ENCODE measurements at regions of chrX and their contacts with region 1.

Region 1: GRCh38 chrX:123093792-123094191 is 90.3 kb upstream of the GRIA3 start:
- DNase-seq: no peak
- ATAC-seq: no peak
- H3K4me3 ChIP-seq: no peak overlapping the region
- H3K27ac ChIP-seq: no peak overlapping the region
- H3K4me1 ChIP-seq: no peaks in the 10 kb centered on the region
- H3K27me3 ChIP-seq: no peaks in the 10 kb centered on the region
- CTCF ChIP-seq: no peak

Region 2: GRCh38 chrX:123060986-123061385 is 32.8 kb before region 1 on chrX:
- CTCF ChIA-PET with region 1: no interaction called
- POLR2A ChIA-PET with region 1: no interaction called
- in situ Hi-C with region 1: no loop called
- intact Hi-C with region 1: loop called (anchors 1 kb)
- DNase-seq: no peak
- ATAC-seq: no peak
- H3K4me3 ChIP-seq: no peak overlapping the region
- H3K27ac ChIP-seq: no peak overlapping the region
- H3K4me1 ChIP-seq: no peaks in the 10 kb centered on the region
- H3K27me3 ChIP-seq: no peaks in the 10 kb centered on the region
- CTCF ChIP-seq: no peak

Region 3: GRCh38 chrX:123545009-123545408 is 451.2 kb after region 1 on chrX:
- CTCF ChIA-PET with region 1: no interaction called
- POLR2A ChIA-PET with region 1: no interaction called
- in situ Hi-C with region 1: no loop called
- intact Hi-C with region 1: no loop called
- DNase-seq: no peak
- ATAC-seq: no peak
- H3K4me3 ChIP-seq: no peak overlapping the region
- H3K27ac ChIP-seq: no peak overlapping the region
- H3K4me1 ChIP-seq: no peaks in the 10 kb centered on the region
- H3K27me3 ChIP-seq: no peaks in the 10 kb centered on the region
- CTCF ChIP-seq: no peak